ENCODE measurements at regions of chr7 and their contacts with region 1.

Region 1: DNA sequence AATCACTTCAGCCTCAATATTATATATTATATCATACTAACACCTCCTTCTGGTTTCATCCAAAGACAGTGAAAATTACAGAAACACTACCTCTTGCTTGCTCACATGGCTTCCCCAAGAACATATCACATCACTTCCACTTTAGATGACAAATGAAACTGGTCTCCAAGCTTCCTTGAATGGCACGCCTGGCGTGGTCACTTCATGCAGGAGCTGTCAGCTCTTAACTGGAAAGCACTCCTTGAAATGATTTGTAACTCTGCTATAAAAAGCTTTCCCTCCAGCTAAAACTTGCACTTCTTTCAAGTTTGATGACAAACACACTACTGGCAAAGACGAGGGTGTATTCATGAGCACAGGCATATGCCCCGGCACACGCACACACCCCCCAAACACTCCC is 84.1 kb upstream of the INHBA start:
- DNase-seq: peak in 1 of 2 donors; percentile 69
- H3K4me3 ChIP-seq: no peak overlapping the region
- H3K27ac ChIP-seq: peak overlapping the region in 1 of 2 donors; percentile 24
- H3K4me1 ChIP-seq: peaks cover 0 to 14% of the 10 kb centered on the region in 2 donors
- H3K27me3 ChIP-seq: no peaks in the 10 kb centered on the region
- CTCF ChIP-seq: no peak

Region 2: GRCh38 chr7:40918701-40919271 is 868.2 kb before region 1 on chr7:
- intact Hi-C with region 1: no loop called
- DNase-seq: no peak
- H3K4me3 ChIP-seq: no peak overlapping the region
- H3K27ac ChIP-seq: peak overlapping the region; percentile 46 to 53
- H3K4me1 ChIP-seq: peaks cover 0 to 8% of the 10 kb centered on the region in 2 donors
- H3K27me3 ChIP-seq: no peaks in the 10 kb centered on the region
- CTCF ChIP-seq: no peak

Region 3: DNA sequence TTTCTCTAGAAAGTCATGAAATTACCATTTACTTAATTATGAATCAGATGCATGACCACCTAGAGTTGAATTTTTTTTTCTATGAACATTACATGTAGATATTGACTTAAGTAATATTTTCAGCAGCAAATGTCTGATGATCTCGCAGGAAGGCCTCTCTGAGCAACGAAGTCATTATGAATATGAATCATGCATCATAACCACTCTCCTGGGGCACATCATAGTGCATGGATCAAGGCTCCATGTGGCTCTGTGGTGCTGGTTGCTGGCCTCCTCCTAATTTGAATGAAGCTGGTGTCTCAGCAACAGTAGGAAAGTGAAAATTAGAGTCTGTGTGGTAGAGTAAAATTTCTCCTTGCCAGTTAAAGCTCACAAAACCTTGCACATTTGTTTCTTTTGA is 37.3 kb after region 1 on chr7:
- intact Hi-C with region 1: loop called (anchors 5 kb)
- DNase-seq: no peak
- H3K4me3 ChIP-seq: no peak overlapping the region
- H3K27ac ChIP-seq: peak overlapping the region in 1 of 2 donors; percentile 81
- H3K4me1 ChIP-seq: peaks cover 0 to 43% of the 10 kb centered on the region in 2 donors
- H3K27me3 ChIP-seq: no peaks in the 10 kb centered on the region
- CTCF ChIP-seq: no peak

Region 4: GRCh38 chr7:41834805-41835694 is 48.1 kb after region 1 on chr7:
- intact Hi-C with region 1: no loop called
- DNase-seq: no peak
- H3K4me3 ChIP-seq: peak overlapping the region in 1 of 2 donors; percentile 25
- H3K27ac ChIP-seq: peak overlapping the region; percentile 72 to 79
- H3K4me1 ChIP-seq: peaks cover 0 to 11% of the 10 kb centered on the region in 2 donors
- H3K27me3 ChIP-seq: no peaks in the 10 kb centered on the region
- CTCF ChIP-seq: no peak

Measured in ascending aorta (tissue), 2 donors.